ENCODE measurements at regions of chr11 and their contacts with region 1.

Region 1: DNA sequence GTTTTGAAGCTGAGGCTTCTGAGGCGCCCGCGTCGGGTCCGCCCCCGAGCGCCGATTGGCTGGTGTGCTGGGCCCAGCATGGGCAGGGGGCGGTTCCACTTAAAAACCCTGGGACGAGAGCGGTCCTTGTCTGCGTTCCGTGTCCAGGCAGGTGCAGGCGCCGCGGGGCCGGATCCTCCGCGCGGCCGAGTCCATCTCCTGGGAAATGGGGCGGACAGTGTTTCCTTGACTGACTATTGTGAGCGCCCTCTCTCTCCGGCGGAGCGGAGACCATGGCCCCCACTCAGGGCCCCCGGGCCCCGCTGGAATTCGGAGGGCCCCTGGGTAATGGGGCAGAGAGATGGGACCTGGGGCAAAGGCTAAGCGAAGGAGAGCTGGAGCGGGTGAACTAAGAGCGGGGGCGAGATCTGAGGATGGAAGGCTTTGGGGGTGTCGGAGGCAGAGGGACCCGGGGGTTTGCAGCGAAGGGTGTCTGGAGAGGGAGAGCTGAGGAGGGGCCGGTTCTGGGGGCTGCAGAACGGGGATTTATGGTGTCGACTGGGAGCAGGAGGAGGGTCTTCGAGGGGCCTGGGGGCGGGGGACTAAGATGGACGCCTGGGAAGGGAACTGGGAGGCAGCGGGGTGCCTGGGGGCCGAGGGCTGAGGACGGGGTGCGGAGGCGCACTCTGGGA is at the start of gene TM7SF2:
- DNase-seq: peak; percentile 93
- H3K4me3 Mint-ChIP-seq: peak within 1 kb of the TSS; percentile 88
- H3K27ac Mint-ChIP-seq: peak within 1 kb of the TSS; percentile 73
- H3K4me1 Mint-ChIP-seq: peaks cover 25% of the 10 kb centered on the region
- H3K27me3 Mint-ChIP-seq: no peaks in the 10 kb centered on the region
- total RNA-seq, gene TM7SF2: 34.4 and 36.9 TPM in 2 replicates

Region 2: GRCh38 chr11:65027213-65028067 is 84.4 kb before region 1 on chr11 and contains the start of gene SNX15:
- intact Hi-C with region 1: loop called (anchors 5 kb)
- DNase-seq: peak; percentile 88
- H3K4me3 Mint-ChIP-seq: peak within 1 kb of the TSS; percentile 76
- H3K27ac Mint-ChIP-seq: peak within 1 kb of the TSS; percentile 87
- H3K4me1 Mint-ChIP-seq: peaks cover 15% of the 10 kb centered on the region
- H3K27me3 Mint-ChIP-seq: peaks cover 2% of the 10 kb centered on the region
- total RNA-seq, gene SNX15: 19.6 and 22.4 TPM in 2 replicates

Region 3: GRCh38 chr11:65040847-65041621 is 70.8 kb before region 1 on chr11 and contains the start of gene SAC3D1:
- intact Hi-C with region 1: loop called (anchors 2 kb)
- DNase-seq: peak; percentile 94
- H3K4me3 Mint-ChIP-seq: peak within 1 kb of the TSS; percentile 88
- H3K27ac Mint-ChIP-seq: peak within 1 kb of the TSS; percentile 96
- H3K4me1 Mint-ChIP-seq: peaks cover 19% of the 10 kb centered on the region
- H3K27me3 Mint-ChIP-seq: no peaks in the 10 kb centered on the region
- total RNA-seq, gene SAC3D1: 17.0 and 18.6 TPM in 2 replicates

Region 4: GRCh38 chr11:65095974-65096806 is 15.7 kb before region 1 on chr11 and contains the start of gene VPS51:
- intact Hi-C with region 1: loop called (anchors 2 kb)
- DNase-seq: peak; percentile 82
- H3K4me3 Mint-ChIP-seq: peak within 1 kb of the TSS; percentile 88
- H3K27ac Mint-ChIP-seq: peak within 1 kb of the TSS; percentile 96
- H3K4me1 Mint-ChIP-seq: peaks cover 11% of the 10 kb centered on the region
- H3K27me3 Mint-ChIP-seq: no peaks in the 10 kb centered on the region
- total RNA-seq, gene VPS51: 121 and 133 TPM in 2 replicates

Region 5: GRCh38 chr11:65329944-65330403 is 218.1 kb after region 1 on chr11:
- intact Hi-C with region 1: loop called (anchors 5 kb)
- DNase-seq: peak; percentile 69
- H3K4me3 Mint-ChIP-seq: no peak overlapping the region
- H3K27ac Mint-ChIP-seq: no peak overlapping the region
- H3K4me1 Mint-ChIP-seq: peaks cover 10% of the 10 kb centered on the region
- H3K27me3 Mint-ChIP-seq: no peaks in the 10 kb centered on the region

Measured in activated T-helper 2 cell treated with anti-CD3 and anti-CD28 coated beads, Interferon-gamma antibody, Interleukin-2, Interleukin-4, amounts not matched to agents 10 μg/mL and 5 μg/mL and 100 μg/mL, durations not matched to agents 14 hours and 24 hours and 36 hours (primary cell).